ENCODE measurements at regions of chr22 and their contacts with region 1.

Region 1: GRCh38 chr22:37244114-37244921 is at the start of gene RAC2:
- DNase-seq: peak; percentile 77 to 94 (median 79)
- H3K4me3 ChIP-seq: peak within 1 kb of the TSS; percentile 89 to 99
- H3K4me3 Mint-ChIP-seq: peak within 1 kb of the TSS; percentile 91 to 99 (median 96)
- H3K27ac ChIP-seq: peak within 1 kb of the TSS; percentile 91
- H3K27ac Mint-ChIP-seq: peak within 1 kb of the TSS; percentile 87 to 98 (median 97)
- H3K4me1 ChIP-seq: peaks cover 45% of the 10 kb centered on the region
- H3K4me1 Mint-ChIP-seq: peaks cover 31 to 57% (median 42%) of the 10 kb centered on the region in 4 donors
- H3K27me3 ChIP-seq: no peaks in the 10 kb centered on the region
- H3K27me3 Mint-ChIP-seq: no peaks in the 10 kb centered on the region
- total RNA-seq, gene RAC2: 304 to 318 TPM

Region 2: GRCh38 chr22:36741204-36741793 is 503.0 kb before region 1 on chr22:
- CTCF ChIA-PET with region 1: no interaction called
- POLR2A ChIA-PET with region 1: no interaction called
- intact Hi-C with region 1: no loop called
- DNase-seq: no peak
- H3K4me3 ChIP-seq: no peak overlapping the region
- H3K4me3 Mint-ChIP-seq: no peak overlapping the region
- H3K27ac ChIP-seq: no peak overlapping the region
- H3K27ac Mint-ChIP-seq: no peak overlapping the region
- H3K4me1 ChIP-seq: no peaks in the 10 kb centered on the region
- H3K4me1 Mint-ChIP-seq: no peaks in the 10 kb centered on the region
- H3K27me3 ChIP-seq: no peaks in the 10 kb centered on the region
- H3K27me3 Mint-ChIP-seq: peaks cover 12 to 19% of the 10 kb centered on the region in 2 donors

Region 3: DNA sequence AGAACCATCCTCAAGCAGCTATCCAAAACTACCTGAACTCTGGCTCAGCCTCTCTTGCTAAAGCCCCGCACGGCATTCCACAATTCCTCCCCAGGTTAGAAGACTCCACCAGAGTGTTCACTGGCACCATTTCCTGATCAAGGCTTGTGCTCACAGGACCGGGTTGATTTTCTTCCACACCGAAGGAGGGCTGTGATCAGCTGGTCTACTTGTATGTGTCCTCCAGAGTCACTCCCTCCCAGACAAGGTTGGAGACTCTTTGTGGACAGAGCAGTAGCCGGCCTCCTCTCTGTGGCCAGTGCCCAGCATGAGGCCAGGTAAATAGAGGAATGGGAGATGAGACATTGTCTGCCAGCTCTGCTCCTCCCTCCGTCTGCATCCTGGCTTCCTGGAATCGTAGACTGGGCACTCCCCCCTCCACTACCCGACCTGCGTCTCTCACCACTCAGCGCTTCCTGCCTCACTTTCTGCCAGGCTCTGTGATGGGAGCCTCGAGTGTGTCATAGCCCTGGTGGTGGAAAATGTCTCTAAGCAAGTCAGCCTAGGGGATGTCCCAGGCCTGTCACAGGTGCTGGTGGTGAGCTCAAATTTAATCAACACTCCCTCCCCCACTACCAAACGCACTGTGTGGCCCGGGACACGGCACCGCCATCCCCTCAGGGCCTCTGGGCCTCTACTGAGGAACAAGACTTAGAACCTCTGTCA is 122.3 kb before region 1 on chr22:
- CTCF ChIA-PET with region 1: no interaction called
- POLR2A ChIA-PET with region 1: interaction called, 12 read pairs
- intact Hi-C with region 1: no loop called
- DNase-seq: peak; percentile 92 to 99 (median 95)
- H3K4me3 ChIP-seq: peak overlapping the region in 1 of 2 donors; percentile 36
- H3K4me3 Mint-ChIP-seq: peak overlapping the region; percentile 76 to 90 (median 84)
- H3K27ac ChIP-seq: peak overlapping the region; percentile 98
- H3K27ac Mint-ChIP-seq: peak overlapping the region; percentile 98 to 100 (median 99)
- H3K4me1 ChIP-seq: peaks cover 58% of the 10 kb centered on the region
- H3K4me1 Mint-ChIP-seq: peaks cover 39 to 75% (median 54%) of the 10 kb centered on the region in 4 donors
- H3K27me3 ChIP-seq: no peaks in the 10 kb centered on the region
- H3K27me3 Mint-ChIP-seq: no peaks in the 10 kb centered on the region

Region 4: GRCh38 chr22:37186228-37186996 is 57.9 kb before region 1 on chr22:
- CTCF ChIA-PET with region 1: interaction called, 3 read pairs
- POLR2A ChIA-PET with region 1: interaction called, 18 read pairs
- intact Hi-C with region 1: no loop called
- DNase-seq: peak; percentile 68 to 79 (median 76)
- H3K4me3 ChIP-seq: peak overlapping the region in 1 of 2 donors; percentile 1
- H3K4me3 Mint-ChIP-seq: peak overlapping the region; percentile 74 to 87 (median 80)
- H3K27ac ChIP-seq: peak overlapping the region; percentile 31
- H3K27ac Mint-ChIP-seq: peak overlapping the region; percentile 73 to 95 (median 85)
- H3K4me1 ChIP-seq: peaks cover 61% of the 10 kb centered on the region
- H3K4me1 Mint-ChIP-seq: peaks cover 24 to 56% (median 40%) of the 10 kb centered on the region in 4 donors
- H3K27me3 ChIP-seq: no peaks in the 10 kb centered on the region
- H3K27me3 Mint-ChIP-seq: no peaks in the 10 kb centered on the region

Region 5: GRCh38 chr22:37218771-37219411 is 25.4 kb before region 1 on chr22:
- CTCF ChIA-PET with region 1: interaction called, 42 read pairs
- POLR2A ChIA-PET with region 1: interaction called, 646 read pairs
- intact Hi-C with region 1: loop called (anchors 1 kb)
- DNase-seq: peak; percentile 86 to 96 (median 91)
- H3K4me3 ChIP-seq: peak overlapping the region; percentile 15 to 51
- H3K4me3 Mint-ChIP-seq: peak overlapping the region; percentile 67 to 90 (median 84)
- H3K27ac ChIP-seq: peak overlapping the region; percentile 58
- H3K27ac Mint-ChIP-seq: peak overlapping the region; percentile 87 to 98 (median 95)
- H3K4me1 ChIP-seq: peaks cover 73% of the 10 kb centered on the region
- H3K4me1 Mint-ChIP-seq: peaks cover 58 to 79% (median 64%) of the 10 kb centered on the region in 4 donors
- H3K27me3 ChIP-seq: no peaks in the 10 kb centered on the region
- H3K27me3 Mint-ChIP-seq: no peaks in the 10 kb centered on the region

Region 6: DNA sequence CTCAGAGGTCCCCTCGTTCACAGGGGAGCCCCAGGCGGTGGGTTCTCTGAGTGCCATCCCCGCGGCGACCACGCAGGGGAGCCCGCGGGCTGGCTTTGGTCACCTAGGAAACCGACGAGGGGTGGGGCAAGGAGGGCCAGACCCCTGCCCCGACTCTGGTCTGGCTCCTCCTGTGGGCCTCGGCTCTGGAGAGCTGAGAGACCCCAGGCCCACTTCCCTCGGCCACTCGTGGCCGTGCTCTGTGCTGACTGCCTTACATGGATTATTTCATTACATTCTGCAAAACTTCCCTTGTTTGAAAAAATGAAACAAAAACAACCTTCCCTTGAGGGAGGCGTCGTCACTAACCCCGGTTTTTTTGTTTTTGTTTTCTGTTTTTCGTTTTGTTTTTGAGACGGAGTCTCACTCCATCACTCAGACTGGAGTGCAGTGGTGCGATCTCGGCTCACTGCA is 22.8 kb after region 1 on chr22:
- CTCF ChIA-PET with region 1: interaction called, 491 read pairs
- POLR2A ChIA-PET with region 1: interaction called, 145 read pairs
- intact Hi-C with region 1: no loop called
- DNase-seq: peak; percentile 65 to 76 (median 72)
- H3K4me3 ChIP-seq: peak overlapping the region; percentile 69 to 73
- H3K4me3 Mint-ChIP-seq: peak overlapping the region; percentile 83 to 93 (median 89)
- H3K27ac ChIP-seq: peak overlapping the region; percentile 69
- H3K27ac Mint-ChIP-seq: peak overlapping the region; percentile 83 to 98 (median 95)
- H3K4me1 ChIP-seq: peaks cover 26% of the 10 kb centered on the region
- H3K4me1 Mint-ChIP-seq: peaks cover 22 to 46% (median 32%) of the 10 kb centered on the region in 4 donors
- H3K27me3 ChIP-seq: no peaks in the 10 kb centered on the region
- H3K27me3 Mint-ChIP-seq: no peaks in the 10 kb centered on the region

Region 7: DNA sequence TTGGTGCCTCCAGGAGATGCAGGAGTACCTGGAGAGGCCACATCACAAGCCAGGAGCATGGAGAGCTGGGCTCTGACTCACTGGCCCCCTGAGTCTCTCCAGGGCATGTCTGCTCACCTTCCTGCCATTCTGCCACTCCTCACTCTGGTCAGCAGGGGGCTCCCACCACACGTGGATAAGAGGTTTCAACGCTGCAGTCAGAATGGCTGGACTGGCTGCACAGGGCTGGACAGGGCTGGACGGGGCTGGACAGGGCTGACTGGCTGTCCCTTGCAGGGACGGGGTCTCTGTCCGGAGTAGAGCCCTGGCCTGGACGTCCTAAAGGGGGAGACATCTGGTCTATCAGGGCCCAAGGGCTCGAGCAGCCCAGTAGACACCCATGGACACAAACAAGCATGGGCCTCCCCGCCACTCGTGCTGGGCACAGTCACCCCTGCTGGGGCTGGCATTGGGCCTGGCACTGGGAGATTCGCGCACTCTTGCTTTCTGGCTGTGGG is 72.6 kb after region 1 on chr22:
- CTCF ChIA-PET with region 1: interaction called, 4 read pairs
- POLR2A ChIA-PET with region 1: interaction called, 13 read pairs
- intact Hi-C with region 1: no loop called
- DNase-seq: peak; percentile 63 to 76 (median 69)
- H3K4me3 ChIP-seq: no peak overlapping the region
- H3K4me3 Mint-ChIP-seq: no peak overlapping the region
- H3K27ac ChIP-seq: no peak overlapping the region
- H3K27ac Mint-ChIP-seq: peak overlapping the region in 3 of 7 donors; percentile 8 to 48 (median 12)
- H3K4me1 ChIP-seq: peaks cover 32% of the 10 kb centered on the region
- H3K4me1 Mint-ChIP-seq: peaks cover 15 to 47% (median 31%) of the 10 kb centered on the region in 4 donors
- H3K27me3 ChIP-seq: no peaks in the 10 kb centered on the region
- H3K27me3 Mint-ChIP-seq: peaks cover 0 to 2% of the 10 kb centered on the region in 2 donors

Measured in CD4-positive, alpha-beta memory T cell (primary cell).